Mammary epithelial cell (primary cell): ENCODE measurements at regions of chr1 and their contacts with region 1.

Region 1: DNA sequence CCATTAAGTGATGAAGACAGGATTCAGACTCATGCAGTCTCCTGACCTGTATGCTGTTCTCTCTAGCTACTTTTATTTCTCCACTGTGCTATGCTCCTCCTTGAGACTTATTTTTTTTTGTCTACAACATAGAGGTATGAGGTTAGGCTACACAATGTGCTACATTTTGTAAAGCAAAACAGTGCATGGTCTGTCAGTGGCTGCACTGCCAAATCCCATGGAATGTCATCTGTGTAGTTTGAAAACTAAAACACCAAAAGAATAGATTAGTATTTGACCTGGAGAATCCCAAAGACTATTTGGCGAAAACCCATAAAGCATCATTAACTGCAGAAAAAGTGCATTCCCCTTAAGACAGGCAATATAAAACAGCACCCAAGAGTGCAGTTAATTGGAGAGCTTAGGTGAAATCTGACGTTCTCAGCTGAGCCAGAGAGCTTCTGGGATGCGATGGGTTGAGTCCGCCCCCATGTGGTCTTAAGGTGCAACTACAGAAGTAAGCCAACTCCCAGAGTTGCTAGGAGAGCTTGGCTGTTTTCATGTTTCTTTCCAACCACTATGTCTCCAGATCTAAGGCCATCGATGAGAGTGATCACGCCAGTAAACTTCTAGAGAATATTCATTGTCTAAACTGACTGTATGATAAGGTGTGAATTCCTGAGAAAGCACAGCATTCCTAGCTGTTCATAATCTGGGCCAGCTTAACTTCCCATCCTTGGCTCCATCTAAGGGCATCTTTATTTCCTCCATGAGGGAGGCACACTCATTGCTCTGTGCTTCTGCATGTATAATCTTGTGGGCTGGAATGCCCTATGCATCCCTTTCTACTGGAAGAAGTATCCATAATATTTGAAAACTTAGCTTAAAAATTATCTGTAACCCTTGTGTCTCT is 20.7 kb upstream of the CYP2J2 start:
- DNase-seq: peak; percentile 45
- H3K4me3 ChIP-seq: no peak overlapping the region
- H3K27ac ChIP-seq: no peak overlapping the region
- H3K4me1 ChIP-seq: no peaks in the 10 kb centered on the region
- H3K27me3 ChIP-seq: peaks cover 2% of the 10 kb centered on the region
- CTCF ChIP-seq: peak; percentile 96 to 98

Region 2: GRCh38 chr1:59707178-59707791 is 240.0 kb before region 1 on chr1:
- CTCF ChIA-PET with region 1: interaction called, 3 read pairs
- dilution Hi-C with region 1: no loop called
- in situ Hi-C with region 1: no loop called
- intact Hi-C with region 1: loop called (anchors 10 kb)
- DNase-seq: peak; percentile 79
- H3K4me3 ChIP-seq: no peak overlapping the region
- H3K27ac ChIP-seq: no peak overlapping the region
- H3K4me1 ChIP-seq: peaks cover 21% of the 10 kb centered on the region
- H3K27me3 ChIP-seq: no peaks in the 10 kb centered on the region
- CTCF ChIP-seq: no peak

Region 3: GRCh38 chr1:59767119-59767518 is 180.2 kb before region 1 on chr1:
- CTCF ChIA-PET with region 1: no interaction called
- dilution Hi-C with region 1: no loop called
- in situ Hi-C with region 1: no loop called
- intact Hi-C with region 1: loop called (anchors 2 kb)
- DNase-seq: no peak
- H3K4me3 ChIP-seq: no peak overlapping the region
- H3K27ac ChIP-seq: no peak overlapping the region
- H3K4me1 ChIP-seq: peaks cover 25% of the 10 kb centered on the region
- H3K27me3 ChIP-seq: no peaks in the 10 kb centered on the region
- CTCF ChIP-seq: no peak

Region 4: DNA sequence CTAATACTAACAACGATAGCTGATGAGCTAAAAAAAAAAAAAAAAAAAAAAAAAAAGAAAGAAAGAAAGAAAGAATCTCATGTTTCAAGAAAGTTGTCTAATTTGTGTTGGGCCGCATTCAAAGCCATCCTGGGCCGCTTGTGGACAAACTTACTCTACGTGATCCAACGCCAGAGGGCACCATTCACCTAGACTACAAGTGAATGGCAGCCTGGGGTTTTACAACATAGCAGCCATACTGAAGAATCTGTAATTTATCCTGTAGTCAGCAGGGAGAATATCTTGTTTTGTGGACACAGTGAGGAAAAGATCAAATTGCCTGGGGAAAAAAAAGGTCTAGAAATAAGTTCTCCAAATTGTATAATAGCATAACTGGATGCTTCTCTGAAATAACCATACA is 67.7 kb before region 1 on chr1:
- CTCF ChIA-PET with region 1: interaction called, 13 read pairs
- dilution Hi-C with region 1: no loop called
- in situ Hi-C with region 1: no loop called
- intact Hi-C with region 1: loop called (anchors 1 kb)
- DNase-seq: peak; percentile 57
- H3K4me3 ChIP-seq: no peak overlapping the region
- H3K27ac ChIP-seq: no peak overlapping the region
- H3K4me1 ChIP-seq: no peaks in the 10 kb centered on the region
- H3K27me3 ChIP-seq: no peaks in the 10 kb centered on the region
- CTCF ChIP-seq: peak; percentile 66 to 74

Region 5: DNA sequence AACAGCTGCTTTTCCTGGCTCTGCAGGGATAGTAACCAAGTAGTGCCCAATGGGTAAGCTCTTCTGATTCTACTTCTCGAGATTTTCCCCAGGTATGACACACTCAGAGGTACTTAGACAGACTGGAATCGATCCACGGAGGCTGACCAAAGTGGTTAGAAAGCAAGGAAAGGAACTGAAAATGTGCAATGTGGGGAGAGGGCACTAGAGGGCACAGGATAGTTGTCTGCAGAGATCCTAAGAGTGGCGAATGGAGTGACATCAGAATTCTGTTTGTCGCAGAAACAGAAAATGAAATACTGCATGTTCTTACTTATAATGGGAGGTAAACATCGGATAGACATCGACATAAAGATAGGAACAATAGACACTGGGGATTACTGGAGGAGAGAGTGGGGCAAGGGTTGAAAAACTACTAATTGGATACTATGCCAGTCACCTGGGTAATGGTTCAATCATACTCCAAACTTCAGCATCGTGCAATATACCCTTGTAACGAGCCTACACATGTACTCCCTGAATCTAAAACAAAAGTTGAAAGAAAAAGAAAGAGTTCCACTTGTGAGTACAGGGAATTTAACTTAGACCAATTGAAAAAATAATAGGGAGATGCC is 44.0 kb before region 1 on chr1:
- CTCF ChIA-PET with region 1: no interaction called
- dilution Hi-C with region 1: no loop called
- in situ Hi-C with region 1: no loop called
- intact Hi-C with region 1: loop called (anchors 1 kb)
- DNase-seq: no peak
- H3K4me3 ChIP-seq: no peak overlapping the region
- H3K27ac ChIP-seq: no peak overlapping the region
- H3K4me1 ChIP-seq: no peaks in the 10 kb centered on the region
- H3K27me3 ChIP-seq: no peaks in the 10 kb centered on the region
- CTCF ChIP-seq: peak; percentile 51 to 71

Region 6: DNA sequence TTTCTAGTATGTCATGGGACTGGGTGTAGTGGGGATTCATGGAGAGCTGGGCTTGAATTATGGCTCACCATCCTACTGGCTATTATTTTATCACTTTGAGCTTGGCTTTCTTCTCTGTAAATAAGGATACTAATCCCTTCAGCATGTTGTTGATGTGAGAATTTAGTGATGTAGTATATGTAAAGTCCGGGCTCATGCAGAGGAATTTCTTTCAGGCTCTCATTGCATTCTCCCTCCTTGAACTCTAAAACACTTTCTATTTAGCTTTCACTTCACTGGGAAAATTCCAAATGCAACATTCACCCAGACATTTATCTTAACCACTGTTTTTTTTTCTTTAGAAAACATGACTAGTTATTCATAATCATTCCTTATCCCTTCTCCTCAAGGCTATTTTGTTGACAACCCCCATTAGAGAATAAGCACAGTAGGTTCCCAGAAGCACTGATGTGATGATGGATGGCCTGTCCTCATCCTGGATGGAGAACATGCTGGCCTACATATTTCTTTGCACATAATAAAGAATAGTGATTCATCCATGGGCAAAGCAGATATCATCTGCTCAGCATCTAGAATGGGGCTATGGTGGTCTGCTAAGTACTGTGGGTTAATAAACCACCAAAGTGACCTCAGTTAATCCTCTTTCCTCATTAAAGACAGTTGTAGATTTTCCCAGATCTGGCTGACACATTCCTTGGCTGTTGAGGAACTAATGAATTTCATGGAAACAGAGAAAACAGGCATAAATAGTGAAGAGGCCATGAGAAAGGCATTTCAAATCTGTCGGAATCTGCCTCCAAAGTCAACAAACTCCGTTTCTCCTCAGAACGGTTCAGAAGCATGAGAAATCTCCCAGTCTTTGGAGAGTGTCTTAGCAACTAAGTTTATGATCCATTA is 47.3 kb after region 1 on chr1:
- CTCF ChIA-PET with region 1: no interaction called
- dilution Hi-C with region 1: no loop called
- in situ Hi-C with region 1: no loop called
- intact Hi-C with region 1: no loop called
- DNase-seq: no peak
- H3K4me3 ChIP-seq: no peak overlapping the region
- H3K27ac ChIP-seq: no peak overlapping the region
- H3K4me1 ChIP-seq: no peaks in the 10 kb centered on the region
- H3K27me3 ChIP-seq: no peaks in the 10 kb centered on the region
- CTCF ChIP-seq: no peak